BJ (cell line): ENCODE measurements at regions of chr13 and their contacts with region 1.

Region 1: DNA sequence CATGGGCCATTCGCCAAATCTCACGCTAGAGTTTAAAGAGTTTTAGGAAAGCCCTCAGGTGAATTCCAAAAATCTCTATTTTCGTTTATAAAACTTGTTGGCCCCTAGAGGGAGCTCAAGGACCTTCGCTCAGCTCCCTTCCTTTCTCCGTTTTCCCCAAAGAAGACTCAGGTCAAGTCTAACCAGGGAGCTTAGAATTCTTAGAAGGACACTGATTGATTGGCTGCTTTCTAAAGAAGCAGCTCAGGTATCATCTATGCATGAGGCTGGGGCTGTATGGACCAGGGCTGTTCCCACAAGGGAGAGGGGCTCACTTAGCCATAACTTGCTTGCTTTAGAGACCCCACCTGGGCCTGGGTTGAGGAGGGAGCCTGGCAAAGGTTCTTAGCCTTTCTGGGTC is 20.5 kb downstream of the DZIP1 start:
- DNase-seq: no peak
- H3K4me3 ChIP-seq: no peak overlapping the region
- H3K27me3 ChIP-seq: no peaks in the 10 kb centered on the region
- CTCF ChIP-seq: peak; percentile 75

Region 2: DNA sequence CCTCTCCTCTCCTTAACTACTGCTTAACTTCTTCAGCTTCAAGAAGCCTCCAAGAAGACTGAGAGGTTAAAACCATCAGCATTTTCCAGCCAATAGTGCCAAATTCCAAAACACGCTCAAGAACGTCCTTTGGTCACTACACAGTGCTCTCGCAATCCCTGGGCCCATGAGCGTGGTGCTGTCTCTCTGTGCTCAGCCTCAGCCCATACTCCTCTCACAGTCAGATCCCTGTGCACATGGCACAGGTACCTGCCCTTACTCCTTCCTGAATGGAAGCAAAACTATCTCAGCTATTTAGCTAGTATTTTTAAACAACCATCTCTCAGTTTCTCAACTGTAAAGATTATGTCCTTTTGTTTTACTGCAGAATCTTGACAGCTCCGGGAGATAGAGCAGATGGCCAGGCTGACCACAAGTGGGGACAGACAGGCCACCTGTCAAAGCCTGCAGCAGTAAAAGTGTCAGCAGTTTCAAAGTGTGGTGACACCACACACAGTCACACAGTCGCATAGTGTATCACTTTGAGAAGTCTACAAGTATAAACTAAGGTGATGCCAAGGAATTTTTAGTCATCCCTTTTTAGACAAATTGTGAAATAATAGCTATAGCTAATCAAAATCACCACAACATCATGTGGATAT is 15.3 kb before region 1 on chr13:
- CTCF ChIA-PET with region 1: interaction called, 13 read pairs
- POLR2A ChIA-PET with region 1: no interaction called
- DNase-seq: no peak
- H3K4me3 ChIP-seq: no peak overlapping the region
- H3K27me3 ChIP-seq: no peaks in the 10 kb centered on the region
- CTCF ChIP-seq: no peak

Region 3: GRCh38 chr13:95644601-95645052 is 20.6 kb after region 1 on chr13 and contains the start of gene DZIP1:
- CTCF ChIA-PET with region 1: interaction called, 11 read pairs
- POLR2A ChIA-PET with region 1: no interaction called
- DNase-seq: no peak
- H3K4me3 ChIP-seq: peak within 1 kb of the TSS; percentile 64
- H3K27me3 ChIP-seq: no peaks in the 10 kb centered on the region
- CTCF ChIP-seq: no peak
- polyA plus RNA-seq, gene DZIP1: 11.4 and 15.7 TPM in 2 replicates

Region 4: GRCh38 chr13:95660981-95661581 is 37.1 kb after region 1 on chr13:
- CTCF ChIA-PET with region 1: interaction called, 18 read pairs
- POLR2A ChIA-PET with region 1: no interaction called
- DNase-seq: no peak
- H3K4me3 ChIP-seq: no peak overlapping the region
- H3K27me3 ChIP-seq: no peaks in the 10 kb centered on the region; the same call in none of the 2 replicates
- CTCF ChIP-seq: peak; percentile 61